ENCODE measurements at regions of chr6 and their contacts with region 1.

Region 1: DNA sequence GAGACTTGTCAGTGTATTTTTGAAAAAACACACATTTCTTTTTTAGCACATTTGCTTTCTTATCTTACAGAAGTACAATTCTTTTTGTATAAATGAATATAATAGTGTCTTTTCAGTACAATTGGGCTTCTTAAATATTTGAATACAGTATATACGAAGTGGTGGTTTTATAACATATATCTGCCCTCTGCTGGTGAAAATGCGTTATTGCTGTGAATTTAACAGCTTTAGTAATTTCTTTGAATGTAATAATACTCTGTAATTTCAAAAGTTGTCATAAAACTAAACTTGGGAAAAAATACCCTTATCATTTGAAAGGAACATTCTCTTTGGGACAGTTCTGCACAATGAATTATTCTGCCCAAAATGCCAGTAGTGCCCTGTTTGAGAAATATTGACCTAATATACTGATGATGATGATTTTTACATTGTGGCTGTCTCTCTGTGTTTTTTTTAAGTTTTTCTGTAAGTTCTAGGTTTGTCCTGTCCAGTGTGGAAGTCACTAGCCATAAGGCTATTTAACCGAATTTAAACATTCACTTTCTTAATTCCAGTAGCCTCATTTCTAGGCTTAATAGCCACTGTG is 19.0 kb downstream of the SMAP1 start:
- DNase-seq: no peak
- H3K4me3 Mint-ChIP-seq: no peak overlapping the region
- H3K27ac Mint-ChIP-seq: no peak overlapping the region
- H3K4me1 Mint-ChIP-seq: peaks cover 44% of the 10 kb centered on the region
- H3K27me3 Mint-ChIP-seq: no peaks in the 10 kb centered on the region

Region 2: DNA sequence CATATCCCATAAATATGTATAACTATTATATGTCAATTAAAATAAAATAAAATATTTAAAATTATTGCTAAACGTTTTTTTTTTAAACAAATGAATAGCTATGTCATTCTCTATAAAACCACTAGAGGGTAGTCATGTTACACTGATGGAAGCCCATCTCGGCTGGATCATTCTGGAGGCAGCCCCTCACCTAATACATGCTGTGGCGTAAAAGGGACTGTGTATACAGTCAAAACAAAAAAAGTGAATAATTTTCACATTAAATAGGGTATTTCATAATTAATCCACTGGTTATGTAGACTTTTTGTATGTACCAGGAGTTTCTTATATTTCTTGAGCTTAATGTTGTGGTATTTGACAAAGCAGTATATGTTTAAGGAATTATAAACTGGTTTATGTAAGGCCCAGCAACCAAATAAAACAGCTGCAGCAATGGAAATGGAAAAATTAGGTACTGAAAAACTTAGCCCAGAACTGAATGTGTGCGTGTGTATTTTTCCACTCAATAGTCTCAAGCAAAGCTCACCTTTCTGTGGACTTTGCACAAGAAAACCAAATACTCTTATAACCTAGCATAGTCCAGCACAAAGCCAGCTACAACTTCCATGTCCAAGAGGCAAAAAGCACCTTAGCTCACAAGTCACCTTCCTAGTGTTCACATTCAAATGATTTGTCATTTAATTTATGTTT is 465.5 kb before region 1 on chr6:
- CTCF ChIA-PET with region 1: interaction called, 3 read pairs
- POLR2A ChIA-PET with region 1: no interaction called
- intact Hi-C with region 1: loop called (anchors 1 kb)
- DNase-seq: no peak
- H3K4me3 Mint-ChIP-seq: no peak overlapping the region
- H3K27ac Mint-ChIP-seq: no peak overlapping the region
- H3K4me1 Mint-ChIP-seq: peaks cover 2% of the 10 kb centered on the region
- H3K27me3 Mint-ChIP-seq: peaks cover 9% of the 10 kb centered on the region

Region 3: DNA sequence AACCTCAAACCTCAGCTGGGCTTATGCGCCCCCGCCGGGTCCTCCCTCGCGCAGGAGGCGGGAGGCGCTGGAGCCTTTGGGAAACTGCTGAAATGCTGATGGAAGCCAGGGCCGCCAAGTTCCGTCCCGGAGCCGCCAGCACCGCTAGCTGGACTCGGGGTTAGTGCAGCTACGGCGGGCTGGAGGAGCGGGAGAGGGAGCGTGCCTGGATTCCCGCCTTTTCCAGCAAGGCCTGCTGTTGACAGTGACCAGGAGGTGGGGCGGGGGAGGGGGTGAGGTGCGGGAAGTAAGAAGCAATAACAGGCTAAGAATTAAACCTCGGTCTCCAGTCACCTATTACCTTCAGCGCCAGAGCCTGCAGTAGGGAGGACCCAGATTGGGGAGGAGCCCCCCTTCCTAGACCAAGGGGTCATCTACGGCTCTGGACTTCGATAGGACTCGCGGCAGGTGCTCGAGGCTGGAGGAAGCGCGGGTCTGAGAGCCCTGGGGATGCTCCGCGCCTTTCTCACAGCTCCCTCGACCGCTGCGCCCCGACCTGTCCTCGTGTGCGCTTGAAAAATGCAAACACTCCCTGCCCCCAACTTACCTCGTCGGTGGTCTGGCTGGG is 404.2 kb before region 1 on chr6:
- CTCF ChIA-PET with region 1: no interaction called
- POLR2A ChIA-PET with region 1: no interaction called
- intact Hi-C with region 1: no loop called
- DNase-seq: no peak
- H3K4me3 Mint-ChIP-seq: no peak overlapping the region
- H3K27ac Mint-ChIP-seq: no peak overlapping the region
- H3K4me1 Mint-ChIP-seq: no peaks in the 10 kb centered on the region
- H3K27me3 Mint-ChIP-seq: peaks cover 39% of the 10 kb centered on the region

Region 4: DNA sequence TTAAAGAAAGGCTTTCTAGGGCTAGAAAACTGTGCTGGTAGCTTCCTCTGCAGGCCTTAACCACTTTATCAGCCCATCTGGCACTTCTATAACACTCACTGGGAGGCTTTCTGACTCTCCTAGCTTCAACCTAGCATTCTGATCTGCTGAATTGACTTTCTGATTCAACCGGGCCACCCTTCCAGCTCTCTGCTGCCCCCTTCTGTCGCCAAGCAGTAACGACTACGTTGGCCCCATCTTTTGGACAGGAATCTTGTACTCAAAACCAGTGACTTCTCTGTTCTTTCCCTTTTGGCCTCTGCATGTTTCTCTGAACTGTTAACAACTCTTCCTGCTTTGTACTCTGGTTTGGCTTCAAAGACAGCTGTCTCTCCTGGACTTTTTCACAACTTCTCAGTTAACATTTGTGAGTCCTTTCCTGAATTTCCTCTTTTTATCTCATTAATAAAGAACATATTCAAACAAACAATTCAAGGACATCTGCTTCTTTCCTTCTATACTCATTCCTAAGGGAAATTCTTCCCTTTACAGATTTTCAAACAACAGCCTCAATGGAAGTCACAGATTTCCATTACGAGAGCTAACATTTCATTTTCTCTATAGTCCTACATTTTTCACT is 317.2 kb before region 1 on chr6:
- CTCF ChIA-PET with region 1: interaction called, 9 read pairs
- POLR2A ChIA-PET with region 1: no interaction called
- intact Hi-C with region 1: loop called (anchors 1 kb)
- DNase-seq: peak; percentile 77
- H3K4me3 Mint-ChIP-seq: no peak overlapping the region
- H3K27ac Mint-ChIP-seq: no peak overlapping the region
- H3K4me1 Mint-ChIP-seq: no peaks in the 10 kb centered on the region
- H3K27me3 Mint-ChIP-seq: peaks cover 6% of the 10 kb centered on the region

Region 5: DNA sequence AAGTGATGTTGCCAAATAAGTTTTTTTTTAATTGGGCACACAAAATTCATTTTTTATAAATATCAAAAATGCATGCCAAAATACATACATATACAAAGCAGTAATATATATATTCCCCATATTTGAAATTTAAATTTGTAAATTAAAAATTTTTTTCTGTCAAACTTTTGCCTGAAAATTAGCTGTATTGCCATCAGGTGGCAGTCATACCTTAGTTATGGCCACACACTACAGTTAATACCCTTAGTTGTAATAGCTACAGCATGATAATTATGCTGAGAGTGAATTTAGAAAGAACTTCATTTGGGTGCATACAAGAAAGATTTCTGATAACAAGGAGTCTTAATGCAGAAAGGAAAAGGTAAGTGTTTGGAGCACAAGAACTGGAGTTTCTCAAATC is 166.1 kb before region 1 on chr6:
- CTCF ChIA-PET with region 1: interaction called, 93 read pairs
- POLR2A ChIA-PET with region 1: no interaction called
- intact Hi-C with region 1: loop called (anchors 1 kb)
- DNase-seq: no peak
- H3K4me3 Mint-ChIP-seq: no peak overlapping the region
- H3K27ac Mint-ChIP-seq: no peak overlapping the region
- H3K4me1 Mint-ChIP-seq: peaks cover 6% of the 10 kb centered on the region
- H3K27me3 Mint-ChIP-seq: no peaks in the 10 kb centered on the region

Region 6: GRCh38 chr6:70566751-70567382 is 119.8 kb before region 1 on chr6 and contains the start of gene SDHAF4:
- CTCF ChIA-PET with region 1: interaction called, 12 read pairs
- POLR2A ChIA-PET with region 1: no interaction called
- intact Hi-C with region 1: loop called (anchors 5 kb)
- DNase-seq: peak; percentile 96
- H3K4me3 Mint-ChIP-seq: peak within 1 kb of the TSS; percentile 84
- H3K27ac Mint-ChIP-seq: peak within 1 kb of the TSS; percentile 60
- H3K4me1 Mint-ChIP-seq: peaks cover 19% of the 10 kb centered on the region
- H3K27me3 Mint-ChIP-seq: no peaks in the 10 kb centered on the region
- total RNA-seq, gene SDHAF4: 13.3 to 13.9 TPM

Region 7: GRCh38 chr6:70673601-70674000 is 13.0 kb before region 1 on chr6:
- CTCF ChIA-PET with region 1: interaction called, 19 read pairs
- POLR2A ChIA-PET with region 1: no interaction called
- intact Hi-C with region 1: loop called (anchors 1 kb)
- DNase-seq: no peak
- H3K4me3 Mint-ChIP-seq: no peak overlapping the region
- H3K27ac Mint-ChIP-seq: peak overlapping the region; percentile 40
- H3K4me1 Mint-ChIP-seq: peaks cover 67% of the 10 kb centered on the region
- H3K27me3 Mint-ChIP-seq: no peaks in the 10 kb centered on the region

Measured in activated CD4-positive, alpha-beta memory T cell treated with anti-CD3 and anti-CD28 coated beads for 36 hours (primary cell).